Activated naive CD4-positive, alpha-beta T cell treated with anti-CD3 and anti-CD28 coated beads for 36 hours (primary cell): ENCODE measurements at regions of chr7 and their contacts with region 1.

Region 1: DNA sequence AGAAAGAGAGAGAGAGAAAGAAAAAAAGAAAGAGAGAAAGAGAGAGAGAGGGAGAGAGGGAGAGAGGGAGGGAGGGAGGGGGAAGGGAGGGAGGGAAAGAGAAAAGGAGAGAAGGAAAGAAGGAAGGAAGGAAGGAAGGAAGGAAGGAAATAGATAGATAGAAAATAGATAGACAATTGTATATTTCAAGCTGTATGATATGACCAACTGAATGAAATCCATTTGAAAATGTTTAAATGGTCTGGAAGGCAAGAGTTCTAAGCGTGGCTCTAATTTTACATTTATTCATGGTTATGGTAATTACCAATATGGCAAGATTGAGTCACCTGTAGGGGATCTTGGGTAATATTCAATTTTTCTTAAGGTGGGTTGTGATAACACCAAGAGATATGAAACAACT is 24.4 kb upstream of the CTAGE4 start:
- DNase-seq: no peak
- H3K4me3 Mint-ChIP-seq: no peak overlapping the region
- H3K27ac Mint-ChIP-seq: no peak overlapping the region
- H3K4me1 Mint-ChIP-seq: no peaks in the 10 kb centered on the region
- H3K27me3 Mint-ChIP-seq: peaks cover 3% of the 10 kb centered on the region

Region 2: GRCh38 chr7:144057972-144058371 is 100.9 kb before region 1 on chr7:
- CTCF ChIA-PET with region 1: no interaction called
- intact Hi-C with region 1: no loop called
- DNase-seq: no peak
- H3K4me3 Mint-ChIP-seq: no peak overlapping the region
- H3K27ac Mint-ChIP-seq: no peak overlapping the region
- H3K4me1 Mint-ChIP-seq: no peaks in the 10 kb centered on the region
- H3K27me3 Mint-ChIP-seq: peaks cover 17% of the 10 kb centered on the region

Region 3: DNA sequence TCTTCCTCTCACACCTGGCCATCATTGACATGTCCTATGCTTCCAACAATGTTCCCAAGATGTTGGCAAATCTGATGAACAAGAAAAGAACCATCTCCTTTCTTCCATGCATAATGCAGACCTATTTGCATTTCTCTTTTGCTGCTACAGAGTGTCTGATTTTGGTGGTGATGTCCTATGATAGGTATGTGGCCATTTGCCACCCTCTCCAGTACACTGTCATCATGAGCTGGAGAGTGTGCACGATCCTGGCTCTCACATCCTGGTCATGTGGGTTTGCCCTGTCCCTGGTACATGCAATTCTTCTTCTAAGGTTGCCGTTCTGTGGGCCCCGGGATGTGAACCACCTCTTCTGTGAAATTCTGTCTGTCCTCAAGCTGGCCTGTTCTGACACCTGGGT is 16.7 kb before region 1 on chr7:
- CTCF ChIA-PET with region 1: no interaction called
- intact Hi-C with region 1: loop called (anchors 2 kb)
- DNase-seq: no peak
- H3K4me3 Mint-ChIP-seq: no peak overlapping the region
- H3K27ac Mint-ChIP-seq: no peak overlapping the region
- H3K4me1 Mint-ChIP-seq: no peaks in the 10 kb centered on the region
- H3K27me3 Mint-ChIP-seq: no peaks in the 10 kb centered on the region